ENCODE measurements at regions of chr3 and their contacts with region 1.

Region 1: GRCh38 chr3:143060906-143061305 is 58.7 kb upstream of the CHST2 start:
- DNase-seq: no peak
- H3K4me3 ChIP-seq: no peak overlapping the region
- H3K27ac ChIP-seq: no peak overlapping the region
- H3K4me1 ChIP-seq: no peaks in the 10 kb centered on the region
- H3K27me3 ChIP-seq: no peaks in the 10 kb centered on the region
- CTCF ChIP-seq: no peak

Region 2: DNA sequence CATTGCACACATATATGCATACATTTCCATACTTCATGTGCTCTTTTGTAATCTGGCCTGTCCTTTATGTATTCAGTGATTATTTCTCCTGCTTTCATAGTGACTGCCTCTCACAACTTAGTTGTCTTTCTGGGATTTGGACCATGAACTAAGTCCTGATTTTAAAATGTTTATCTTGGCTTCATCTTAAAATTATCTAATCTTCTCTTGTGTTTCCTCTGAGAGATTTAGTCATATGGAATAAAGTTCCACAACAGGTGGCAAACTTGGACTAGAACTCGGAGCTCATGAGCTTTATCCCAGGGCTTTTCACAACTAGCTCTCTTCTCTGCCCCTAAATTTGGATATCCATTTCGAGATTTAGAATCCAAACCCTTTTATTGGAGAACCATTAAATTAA is 15.3 kb before region 1 on chr3:
- CTCF ChIA-PET with region 1: no interaction called
- POLR2A ChIA-PET with region 1: interaction called, 17 read pairs
- intact Hi-C with region 1: no loop called
- DNase-seq: no peak
- H3K4me3 ChIP-seq: no peak overlapping the region
- H3K27ac ChIP-seq: no peak overlapping the region
- H3K4me1 ChIP-seq: no peaks in the 10 kb centered on the region
- H3K27me3 ChIP-seq: no peaks in the 10 kb centered on the region
- CTCF ChIP-seq: no peak

Measured in A673 (cell line).